K562 (cell line): ENCODE measurements at regions of chr22 and their contacts with region 1.

Region 1: DNA sequence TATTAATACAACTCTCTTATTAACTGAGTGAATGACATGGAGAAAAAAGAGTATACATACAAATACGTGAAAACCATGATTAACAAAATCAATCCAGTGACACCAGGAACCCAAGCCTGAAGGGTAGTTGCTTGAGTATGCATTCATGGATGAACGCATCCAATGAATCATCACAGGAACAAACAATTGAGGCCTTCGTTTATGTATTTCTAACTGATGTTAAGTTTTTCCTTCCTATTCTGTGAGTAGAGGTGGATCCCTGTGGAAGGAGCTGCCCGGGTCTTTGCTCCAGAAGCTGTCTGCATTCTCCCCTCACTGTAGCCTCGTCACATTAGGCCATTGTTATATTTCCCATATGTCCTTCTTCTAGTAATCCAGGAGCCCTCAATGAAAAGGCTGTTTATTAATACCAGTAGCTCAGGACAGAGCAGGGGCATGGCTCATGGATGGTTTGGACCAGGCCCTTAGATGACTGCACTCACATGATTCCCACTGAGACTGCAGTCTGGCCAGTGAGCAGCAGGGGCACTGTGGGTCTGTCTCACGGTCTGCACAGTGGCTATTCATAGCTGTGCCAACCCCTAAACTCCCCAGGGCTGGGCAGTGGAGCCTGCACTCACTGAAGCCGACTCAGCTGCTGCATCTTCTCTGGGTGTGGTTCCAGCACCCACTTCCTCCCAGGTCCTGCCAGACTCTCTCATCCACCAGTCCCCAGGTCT is 128.1 kb upstream of the TOP3B start:
- DNase-seq: peak; percentile 89 to 96 (median 94)
- ATAC-seq: peak; percentile 95
- H3K4me3 ChIP-seq: no peak overlapping the region
- H3K27ac ChIP-seq: 0 out of 3 replicates have a peak overlapping the region, but pooled peaks have one; percentile 2
- H3K4me1 ChIP-seq: peaks cover 13 to 36% of the 10 kb centered on the region in 2 experiments; a peak in 4 of 5 replicates
- H3K27me3 ChIP-seq: no peaks in the 10 kb centered on the region
- CTCF ChIP-seq: no peak
- EP300 ChIP-seq: no peak
- POLR2A ChIP-seq: no peak
- RAD21 ChIP-seq: peak in 1 of 2 experiments; percentile 35; a peak in 1 of 4 replicates

Region 2: DNA sequence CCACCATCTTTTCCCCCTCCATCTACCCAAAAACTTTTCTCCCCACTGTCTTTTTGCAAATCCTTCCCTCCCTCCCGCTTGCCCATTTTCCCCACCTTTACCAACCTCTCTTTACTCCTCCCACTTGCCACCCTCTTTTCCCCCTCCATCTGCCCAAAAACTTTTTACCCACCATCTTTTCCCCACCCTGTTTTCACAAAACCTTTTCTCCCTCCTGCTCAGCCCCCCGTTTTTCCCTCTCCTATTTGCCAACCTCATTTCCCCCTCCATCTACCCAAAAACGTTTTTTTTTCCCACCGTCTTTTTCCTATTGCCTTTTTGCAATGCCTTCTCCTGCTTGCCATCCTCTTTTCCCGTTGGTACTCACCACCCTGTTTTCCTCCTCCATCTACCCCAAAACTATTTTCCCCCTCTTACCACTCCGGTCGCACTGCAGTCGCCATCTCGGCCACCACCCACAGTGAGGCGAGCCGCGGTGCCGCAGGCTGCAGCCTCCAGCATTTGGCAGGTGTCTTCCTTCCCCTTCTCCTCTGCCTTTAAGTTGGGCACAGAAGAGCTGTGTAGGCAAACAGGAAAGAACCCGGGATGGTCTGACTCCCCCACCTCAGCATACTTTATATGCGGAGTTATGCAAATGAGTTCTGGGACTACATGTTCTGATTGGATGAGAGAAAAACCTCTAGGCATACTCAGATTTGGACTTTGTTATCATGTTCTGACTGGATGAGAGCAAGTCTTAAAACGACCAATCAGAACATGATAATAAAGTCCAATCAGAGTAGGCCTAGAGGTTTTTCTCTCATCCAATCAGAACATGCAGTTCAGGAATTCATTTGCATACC is 12.6 kb after region 1 on chr22:
- CTCF ChIA-PET with region 1: no interaction called
- POLR2A ChIA-PET with region 1: interaction called, 18 read pairs
- in situ Hi-C with region 1: no loop called
- intact Hi-C with region 1: no loop called
- DNase-seq: peak in 1 of 4 experiments; percentile 38
- ATAC-seq: peak; percentile 51
- H3K4me3 ChIP-seq: no peak overlapping the region
- H3K27ac ChIP-seq: no peak overlapping the region
- H3K4me1 ChIP-seq: peaks cover 0 to 18% of the 10 kb centered on the region in 2 experiments; a peak in 1 of 5 replicates
- H3K27me3 ChIP-seq: peaks cover 35 to 36% of the 10 kb centered on the region in 2 experiments
- CTCF ChIP-seq: no peak
- EP300 ChIP-seq: no peak
- POLR2A ChIP-seq: no peak
- RAD21 ChIP-seq: no peak

Region 3: DNA sequence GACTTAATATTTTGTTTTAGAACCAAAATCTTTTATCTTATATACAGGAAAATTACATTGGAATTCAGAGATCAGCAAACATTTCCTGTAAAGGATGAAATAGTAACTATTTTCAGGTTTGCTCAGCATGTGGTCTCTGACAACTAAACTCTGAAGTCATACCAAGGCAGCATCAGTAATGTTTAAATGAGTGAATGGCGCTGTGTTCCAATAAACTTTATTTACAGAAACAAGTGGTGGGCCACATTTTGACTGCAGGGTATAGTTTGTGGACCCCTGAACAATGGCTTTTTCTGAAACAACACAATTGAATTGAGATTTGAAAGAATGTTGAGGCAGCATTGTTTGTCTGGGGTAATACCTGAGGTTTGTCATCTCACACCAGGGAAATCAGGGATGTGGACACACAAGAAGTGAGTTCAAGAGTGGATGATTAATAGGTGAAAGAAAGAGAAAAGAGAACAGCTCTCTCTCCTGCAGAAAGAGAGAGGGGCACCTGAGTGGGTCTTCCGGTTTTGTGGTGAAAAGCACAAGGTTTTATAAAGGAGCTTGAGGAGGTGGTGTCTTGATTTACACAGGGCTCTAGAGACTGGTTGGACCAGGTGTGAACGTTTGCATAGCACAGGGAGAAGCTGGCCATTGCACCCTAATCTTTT is 20.4 kb after region 1 on chr22:
- CTCF ChIA-PET with region 1: no interaction called
- POLR2A ChIA-PET with region 1: interaction called, 38 read pairs
- in situ Hi-C with region 1: no loop called
- intact Hi-C with region 1: no loop called
- DNase-seq: no peak
- ATAC-seq: peak; percentile 27; the same call in 2 of the 3 replicates
- H3K4me3 ChIP-seq: no peak overlapping the region
- H3K27ac ChIP-seq: no peak overlapping the region
- H3K4me1 ChIP-seq: peaks cover 0 to 2% of the 10 kb centered on the region in 2 experiments; a peak in 2 of 5 replicates
- H3K27me3 ChIP-seq: peaks cover 14 to 53% of the 10 kb centered on the region in 2 experiments
- CTCF ChIP-seq: no peak
- EP300 ChIP-seq: no peak
- POLR2A ChIP-seq: no peak
- RAD21 ChIP-seq: no peak

Region 4: DNA sequence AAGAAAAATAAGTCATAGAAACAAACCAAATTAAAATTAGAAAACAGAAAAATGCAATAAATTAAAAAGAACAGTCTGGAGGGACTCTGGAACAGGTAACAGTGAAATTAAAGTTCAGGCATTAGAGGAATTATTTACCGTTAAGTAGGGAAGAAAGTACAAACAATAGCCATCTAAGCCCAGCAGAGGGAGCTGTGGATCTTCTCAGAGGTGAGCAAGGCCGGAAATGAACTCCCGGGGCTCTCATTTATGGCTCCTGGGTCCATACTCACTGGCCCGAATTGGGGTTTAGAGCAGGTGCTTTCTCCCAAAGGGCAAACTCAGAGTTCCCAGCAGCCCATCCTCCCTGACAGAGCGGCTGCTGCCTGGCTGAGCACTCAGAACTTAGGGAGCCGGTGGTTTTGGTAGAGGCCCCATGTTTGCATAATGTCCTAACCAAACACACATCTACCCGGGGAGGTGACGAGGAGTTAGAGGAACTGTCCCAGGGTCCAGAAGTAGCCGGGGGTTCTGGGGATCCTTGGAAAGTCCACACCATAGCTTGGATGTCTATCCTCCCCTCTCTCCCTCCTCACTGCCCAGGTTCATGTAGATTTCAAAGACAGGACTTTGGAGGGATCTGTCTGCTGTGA is 46.1 kb after region 1 on chr22:
- CTCF ChIA-PET with region 1: interaction called, 9 read pairs
- POLR2A ChIA-PET with region 1: interaction called, 3 read pairs
- in situ Hi-C with region 1: loop called (anchors 5 kb)
- intact Hi-C with region 1: loop called (anchors 5 kb)
- DNase-seq: peak; percentile 98 to 100 (median 99)
- ATAC-seq: peak; percentile 98
- H3K4me3 ChIP-seq: no peak overlapping the region
- H3K27ac ChIP-seq: peak overlapping the region; percentile 1; the same call in 1 of the 3 replicates
- H3K4me1 ChIP-seq: peaks cover 0 to 4% of the 10 kb centered on the region in 2 experiments; a peak in 1 of 5 replicates
- H3K27me3 ChIP-seq: peaks cover 8 to 9% of the 10 kb centered on the region in 2 experiments
- CTCF ChIP-seq: peak in 1 of 3 experiments; percentile 99; a peak in 2 of 6 replicates
- EP300 ChIP-seq: peak; percentile 79
- POLR2A ChIP-seq: no peak
- RAD21 ChIP-seq: no peak

Region 5: DNA sequence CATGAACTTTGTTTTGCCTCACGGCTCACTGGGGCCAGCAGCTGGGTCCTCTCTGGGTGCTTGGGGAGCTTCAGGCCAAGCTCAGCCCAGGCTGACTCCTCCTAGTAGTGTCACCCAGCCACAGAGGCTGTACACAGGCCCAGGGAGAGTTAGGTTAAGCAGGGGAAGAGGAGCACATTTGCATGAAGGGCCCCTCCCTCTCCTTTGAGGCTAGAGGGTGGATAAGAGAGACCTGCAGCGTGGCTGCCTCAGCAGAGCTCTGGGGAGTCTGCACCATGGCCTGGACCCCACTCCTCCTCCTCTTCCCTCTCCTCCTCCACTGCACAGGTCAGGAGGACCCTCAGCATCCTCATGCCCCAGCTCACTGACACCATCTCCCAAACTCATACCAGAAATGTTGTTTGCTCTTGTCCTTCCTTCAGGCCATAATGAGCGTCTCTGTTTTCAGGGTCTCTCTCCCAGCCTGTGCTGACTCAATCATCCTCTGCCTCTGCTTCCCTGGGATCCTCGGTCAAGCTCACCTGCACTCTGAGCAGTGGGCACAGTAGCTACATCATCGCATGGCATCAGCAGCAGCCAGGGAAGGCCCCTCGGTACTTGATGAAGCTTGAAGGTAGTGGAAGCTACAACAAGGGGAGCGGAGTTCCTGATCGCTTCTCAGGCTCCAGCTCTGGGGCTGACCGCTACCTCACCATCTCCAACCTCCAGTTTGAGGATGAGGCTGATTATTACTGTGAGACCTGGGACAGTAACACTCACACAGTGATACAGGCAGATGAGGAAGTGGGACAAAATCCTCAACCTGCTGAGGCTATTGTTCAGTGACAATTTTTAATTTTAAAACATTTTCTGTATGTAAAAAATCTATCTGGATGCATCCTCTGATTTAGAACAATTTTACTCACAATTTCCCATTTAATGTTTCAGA is 51.5 kb after region 1 on chr22:
- CTCF ChIA-PET with region 1: interaction called, 9 read pairs
- POLR2A ChIA-PET with region 1: interaction called, 3 read pairs
- in situ Hi-C with region 1: loop called (anchors 5 kb)
- intact Hi-C with region 1: no loop called
- DNase-seq: peak in 2 of 4 experiments; percentile 38 to 48
- ATAC-seq: peak; percentile 61
- H3K4me3 ChIP-seq: no peak overlapping the region
- H3K27ac ChIP-seq: no peak overlapping the region
- H3K4me1 ChIP-seq: no peaks in the 10 kb centered on the region
- H3K27me3 ChIP-seq: peaks cover 0 to 28% of the 10 kb centered on the region in 2 experiments; a peak in 2 of 5 replicates
- CTCF ChIP-seq: no peak
- EP300 ChIP-seq: no peak
- POLR2A ChIP-seq: no peak
- RAD21 ChIP-seq: no peak